ENCODE measurements at regions of chr20 and their contacts with region 1.

Region 1: DNA sequence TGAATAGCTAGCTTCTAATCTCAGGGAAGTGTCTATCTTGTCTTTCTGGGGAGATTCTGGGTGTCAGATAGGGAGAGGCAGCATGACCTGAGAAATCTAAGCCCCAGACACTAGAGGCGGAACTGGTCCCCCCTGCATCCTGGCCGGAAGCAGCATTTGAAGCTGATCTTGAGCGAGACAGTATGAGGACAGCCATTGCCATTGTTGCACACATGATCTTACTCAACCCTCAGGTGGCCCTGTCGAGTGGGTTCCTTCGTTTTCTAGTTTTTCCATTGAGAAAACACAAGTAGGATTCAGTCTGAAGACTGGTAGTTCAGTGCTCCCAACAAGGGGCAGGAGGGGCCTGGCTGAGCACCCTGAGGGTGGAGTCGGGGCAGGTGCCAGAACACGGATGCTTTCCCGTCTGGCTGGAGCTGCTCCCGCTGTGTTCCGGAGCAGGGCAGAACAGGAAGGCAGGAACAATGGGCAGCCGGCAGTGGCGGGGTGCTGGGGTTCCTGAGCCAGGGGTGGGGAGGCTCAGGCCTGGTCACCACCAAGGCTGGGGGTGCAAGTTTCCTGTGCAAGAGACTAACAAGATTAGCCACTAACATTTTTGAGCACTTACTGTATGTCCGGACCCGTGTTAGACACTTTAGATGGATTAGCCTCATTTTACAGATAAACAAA is 7.9 kb upstream of the SDCBP2 start:
- DNase-seq: peak; percentile 97
- H3K4me3 ChIP-seq: no peak overlapping the region
- H3K27ac ChIP-seq: peak overlapping the region; percentile 93
- H3K4me1 ChIP-seq: peaks cover 53% of the 10 kb centered on the region
- H3K27me3 ChIP-seq: no peaks in the 10 kb centered on the region
- CTCF ChIP-seq: no peak
- POLR2A ChIP-seq: peak; percentile 59

Region 2: GRCh38 chr20:1375515-1375914 is 38.7 kb after region 1 on chr20:
- CTCF ChIA-PET with region 1: interaction called, 3 read pairs
- POLR2A ChIA-PET with region 1: no interaction called
- dilution Hi-C with region 1: no loop called
- intact Hi-C with region 1: loop called (anchors 2 kb)
- DNase-seq: peak; percentile 47
- H3K4me3 ChIP-seq: no peak overlapping the region
- H3K27ac ChIP-seq: peak overlapping the region; percentile 83
- H3K4me1 ChIP-seq: peaks cover 99% of the 10 kb centered on the region
- H3K27me3 ChIP-seq: no peaks in the 10 kb centered on the region
- CTCF ChIP-seq: no peak
- POLR2A ChIP-seq: peak; percentile 45

Region 3: DNA sequence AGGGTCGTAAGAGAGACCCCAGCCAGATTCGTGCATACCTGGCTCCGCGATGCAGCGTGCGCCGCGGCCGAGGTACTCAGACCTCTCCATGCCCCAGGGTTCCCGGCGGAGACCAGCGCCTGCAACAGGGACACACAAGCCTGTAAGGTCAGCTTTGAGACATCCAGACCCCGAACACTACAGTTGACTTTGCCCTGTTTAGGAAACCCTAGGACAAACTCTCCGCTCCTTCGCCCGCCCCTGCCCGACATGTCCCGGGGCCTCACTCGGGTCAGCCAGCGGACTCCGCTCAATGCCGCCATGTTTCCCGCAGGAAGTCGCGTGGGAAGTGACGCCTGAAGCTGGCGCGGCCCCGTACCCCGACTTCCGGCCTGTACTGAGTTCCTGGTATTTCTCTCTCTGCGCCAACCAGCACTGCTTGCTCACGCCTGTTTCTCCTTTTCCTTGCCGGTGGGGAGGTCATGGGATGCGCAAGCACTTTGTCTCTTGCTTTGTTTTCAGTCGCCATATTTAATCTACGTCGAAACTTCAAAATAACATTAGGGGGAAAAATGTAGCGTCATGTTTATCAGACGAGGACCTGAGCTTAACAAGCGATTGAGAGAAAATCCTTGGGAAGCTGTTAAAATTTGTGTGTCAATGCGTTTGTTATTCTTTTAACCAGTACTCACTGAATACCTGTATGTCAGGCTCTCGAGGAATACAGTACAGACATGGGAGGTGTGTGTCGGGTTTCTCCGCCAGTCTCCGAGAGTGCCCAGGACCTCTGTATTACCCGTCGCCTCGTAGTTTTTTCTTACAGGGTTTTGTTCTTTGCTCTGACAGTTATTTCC is 1327.3 kb after region 1 on chr20 and contains the start of gene IDH3B:
- CTCF ChIA-PET with region 1: no interaction called
- POLR2A ChIA-PET with region 1: no interaction called
- dilution Hi-C with region 1: no loop called
- intact Hi-C with region 1: loop called (anchors 5 kb)
- DNase-seq: peak; percentile 90
- H3K4me3 ChIP-seq: peak within 1 kb of the TSS; percentile 36 to 80 (median 62)
- H3K27ac ChIP-seq: peak within 1 kb of the TSS; percentile 54
- H3K4me1 ChIP-seq: peaks cover 11% of the 10 kb centered on the region
- H3K27me3 ChIP-seq: peaks cover 8 to 11% of the 10 kb centered on the region in 2 experiments
- CTCF ChIP-seq: no peak
- POLR2A ChIP-seq: peak; percentile 93
- total RNA-seq, gene IDH3B: 86.9 and 87.9 TPM in 2 replicates

Measured in endothelial cell of umbilical vein (primary cell).